PC-3 (cell line): ENCODE measurements at regions of chr12 and their contacts with region 1.

Region 1: DNA sequence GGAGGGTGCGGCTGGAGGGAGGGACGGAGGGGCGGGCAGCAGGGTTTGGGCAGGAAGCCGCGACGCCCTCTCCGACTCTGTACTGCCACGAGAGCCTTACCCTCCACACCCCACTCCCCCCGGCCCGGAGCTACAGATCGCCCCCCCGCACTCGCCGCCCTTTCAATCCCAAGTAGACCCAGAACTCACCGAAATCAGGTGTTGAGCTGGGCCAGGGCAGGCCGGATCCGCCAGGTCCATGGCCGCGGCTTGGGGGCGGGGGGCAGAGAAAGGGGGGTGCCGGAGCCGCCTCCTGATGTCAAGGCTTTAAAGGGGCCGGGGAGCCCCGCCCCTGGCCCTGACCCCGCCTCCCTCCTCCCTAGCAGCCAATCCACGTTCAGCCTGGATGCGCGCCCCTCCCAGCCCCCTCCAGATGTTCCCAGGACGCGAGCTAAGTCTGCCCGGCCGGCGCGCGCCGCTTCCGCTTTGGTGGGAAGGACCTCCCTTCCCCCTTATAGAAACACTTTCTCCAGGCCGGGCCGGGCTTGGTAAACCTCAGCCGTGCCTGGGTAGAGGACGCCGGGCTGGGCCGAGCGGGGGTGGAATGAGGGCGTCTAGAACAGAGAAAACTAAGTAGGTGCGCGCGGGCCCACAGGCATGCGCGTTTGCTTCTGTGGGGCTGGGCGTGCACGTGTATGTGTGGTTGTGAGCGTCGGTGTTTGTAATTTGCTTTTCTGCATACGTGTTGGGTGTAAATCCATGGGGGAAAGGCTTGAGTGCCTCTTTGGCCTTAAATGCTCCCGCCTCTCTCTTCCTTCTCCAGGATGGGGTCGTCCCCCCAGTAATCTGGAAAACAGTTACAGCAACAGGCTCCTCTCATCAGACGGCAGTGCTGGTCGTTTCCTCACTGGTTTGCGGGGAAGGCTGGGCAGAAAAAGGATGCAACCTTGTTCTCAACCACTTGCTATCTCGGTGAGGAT is at the start of gene NCKAP5L:
- DNase-seq: peak; percentile 90
- ATAC-seq: peak; percentile 87
- H3K4me3 ChIP-seq: peak within 1 kb of the TSS; percentile 80
- H3K27ac ChIP-seq: peak within 1 kb of the TSS; percentile 5; the same call in 1 of the 2 replicates
- H3K4me1 ChIP-seq: peaks cover 24% of the 10 kb centered on the region
- H3K27me3 ChIP-seq: no peaks in the 10 kb centered on the region
- CTCF ChIP-seq: no peak
- total RNA-seq, gene NCKAP5L: 13.3 and 14.2 TPM in 2 replicates

Region 2: GRCh38 chr12:49842519-49843352 is 14.3 kb after region 1 on chr12 and contains the start of gene BCDIN3D:
- CTCF ChIA-PET with region 1: interaction called, 4 read pairs
- POLR2A ChIA-PET with region 1: interaction called, 4 read pairs
- intact Hi-C with region 1: loop called (anchors 2 kb)
- DNase-seq: peak; percentile 93
- ATAC-seq: peak; percentile 95
- H3K4me3 ChIP-seq: peak within 1 kb of the TSS; percentile 92
- H3K27ac ChIP-seq: peak within 1 kb of the TSS; percentile 76
- H3K4me1 ChIP-seq: peaks cover 17% of the 10 kb centered on the region
- H3K27me3 ChIP-seq: no peaks in the 10 kb centered on the region
- CTCF ChIP-seq: no peak
- total RNA-seq, gene BCDIN3D: 4.5 and 5.4 TPM in 2 replicates

Region 3: DNA sequence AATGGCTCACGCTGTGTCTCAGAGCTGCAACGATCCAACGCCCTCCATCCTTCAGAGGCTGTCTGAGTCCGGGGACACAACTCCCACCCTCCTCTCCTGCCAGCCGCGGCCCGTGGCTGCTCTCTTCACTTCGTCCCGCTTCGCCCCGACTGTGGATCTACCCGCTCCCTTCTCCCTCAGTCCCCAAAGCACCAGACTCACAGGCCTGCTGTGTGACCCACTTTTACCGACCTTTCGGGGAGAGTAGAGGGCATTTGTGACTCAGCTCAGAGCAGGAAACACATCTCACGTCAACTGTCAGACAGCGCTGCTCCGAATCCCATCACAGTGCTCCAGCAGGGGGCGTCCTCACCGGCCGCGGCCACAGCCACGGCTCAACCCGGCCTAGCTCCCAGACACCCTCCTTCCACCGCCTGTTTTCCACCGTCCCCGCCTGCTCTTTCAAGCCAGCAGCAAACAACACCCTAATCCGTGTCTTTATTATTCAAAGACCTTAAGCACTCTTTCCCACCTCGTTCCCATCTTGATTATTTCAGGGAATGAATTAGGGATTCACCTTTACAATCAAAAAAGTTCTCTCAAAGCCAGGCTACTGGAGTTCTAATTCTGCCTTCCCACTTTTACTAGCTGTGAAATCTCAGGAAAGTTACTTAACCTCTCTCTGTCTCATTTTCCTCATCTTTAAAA is 117.1 kb after region 1 on chr12:
- CTCF ChIA-PET with region 1: no interaction called
- POLR2A ChIA-PET with region 1: interaction called, 11 read pairs
- intact Hi-C with region 1: no loop called
- DNase-seq: peak; percentile 84
- ATAC-seq: peak; percentile 94
- H3K4me3 ChIP-seq: no peak overlapping the region
- H3K27ac ChIP-seq: no peak overlapping the region
- H3K4me1 ChIP-seq: peaks cover 19% of the 10 kb centered on the region
- H3K27me3 ChIP-seq: no peaks in the 10 kb centered on the region
- CTCF ChIP-seq: peak; percentile 88

Region 4: GRCh38 chr12:50174971-50175715 is 346.7 kb after region 1 on chr12:
- CTCF ChIA-PET with region 1: no interaction called
- POLR2A ChIA-PET with region 1: interaction called, 24 read pairs
- intact Hi-C with region 1: no loop called
- DNase-seq: peak; percentile 88
- ATAC-seq: peak; percentile 38
- H3K4me3 ChIP-seq: no peak overlapping the region
- H3K27ac ChIP-seq: no peak overlapping the region
- H3K4me1 ChIP-seq: no peaks in the 10 kb centered on the region
- H3K27me3 ChIP-seq: no peaks in the 10 kb centered on the region
- CTCF ChIP-seq: peak; percentile 83